Activated naive CD4-positive, alpha-beta T cell treated with anti-CD3 and anti-CD28 coated beads for 36 hours (primary cell): ENCODE measurements at regions of chr1 and their contacts with region 1.

Region 1: GRCh38 chr1:7752512-7753417 is 18.3 kb upstream of the VAMP3 start:
- DNase-seq: peak; percentile 69
- H3K4me3 Mint-ChIP-seq: no peak overlapping the region
- H3K27ac Mint-ChIP-seq: no peak overlapping the region
- H3K4me1 Mint-ChIP-seq: peaks cover 8% of the 10 kb centered on the region
- H3K27me3 Mint-ChIP-seq: peaks cover 8% of the 10 kb centered on the region

Region 2: GRCh38 chr1:7539769-7540175 is 213.0 kb before region 1 on chr1:
- CTCF ChIA-PET with region 1: no interaction called
- intact Hi-C with region 1: loop called (anchors 10 kb)
- DNase-seq: peak; percentile 61
- H3K4me3 Mint-ChIP-seq: no peak overlapping the region
- H3K27ac Mint-ChIP-seq: no peak overlapping the region
- H3K4me1 Mint-ChIP-seq: no peaks in the 10 kb centered on the region
- H3K27me3 Mint-ChIP-seq: peaks cover 7% of the 10 kb centered on the region

Region 3: DNA sequence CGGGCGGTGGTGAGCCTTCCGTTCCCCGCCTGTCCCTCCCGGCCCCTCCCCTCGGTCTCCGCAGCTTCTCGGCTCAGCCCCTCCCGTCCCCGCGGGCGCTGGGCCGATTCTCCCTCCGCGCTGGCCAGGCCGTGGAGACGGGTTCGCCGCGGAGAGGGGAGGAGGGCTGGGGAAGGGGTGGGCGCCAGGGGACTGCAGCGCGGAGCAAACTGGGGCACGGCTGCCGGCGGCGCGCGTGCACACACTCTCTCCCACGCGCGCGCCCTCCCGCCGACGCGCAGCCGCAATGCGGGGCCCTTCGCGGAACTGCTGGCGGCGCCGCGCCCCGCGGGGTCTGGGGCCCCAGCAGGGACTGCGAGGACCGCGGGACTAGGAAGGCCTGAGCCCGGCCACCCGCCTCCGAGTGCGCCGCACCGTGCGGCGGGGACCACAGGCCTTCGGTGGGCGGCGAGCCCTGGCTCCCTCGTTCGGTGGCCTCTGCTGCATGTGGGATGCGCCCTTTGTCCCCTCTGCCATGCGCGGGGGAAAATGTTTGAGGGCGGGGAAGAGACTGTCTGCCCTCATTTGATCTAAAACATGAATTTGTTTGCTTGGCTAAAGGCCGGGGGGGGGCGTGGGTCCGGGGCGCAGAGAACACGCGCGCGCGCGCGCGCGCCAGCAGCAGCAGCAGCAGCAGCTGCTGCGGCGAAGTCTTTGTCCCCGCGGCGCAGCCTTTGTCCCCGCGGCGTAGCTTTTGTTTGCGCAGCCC is 72.4 kb before region 1 on chr1:
- CTCF ChIA-PET with region 1: interaction called, 42 read pairs
- intact Hi-C with region 1: no loop called
- DNase-seq: peak; percentile 17
- H3K4me3 Mint-ChIP-seq: peak overlapping the region; percentile 70
- H3K27ac Mint-ChIP-seq: no peak overlapping the region
- H3K4me1 Mint-ChIP-seq: no peaks in the 10 kb centered on the region
- H3K27me3 Mint-ChIP-seq: no peaks in the 10 kb centered on the region

Region 4: GRCh38 chr1:7710859-7711258 is 41.9 kb before region 1 on chr1:
- CTCF ChIA-PET with region 1: interaction called, 20 read pairs
- intact Hi-C with region 1: no loop called
- DNase-seq: no peak
- H3K4me3 Mint-ChIP-seq: no peak overlapping the region
- H3K27ac Mint-ChIP-seq: no peak overlapping the region
- H3K4me1 Mint-ChIP-seq: peaks cover 3% of the 10 kb centered on the region
- H3K27me3 Mint-ChIP-seq: peaks cover 36% of the 10 kb centered on the region

Region 5: DNA sequence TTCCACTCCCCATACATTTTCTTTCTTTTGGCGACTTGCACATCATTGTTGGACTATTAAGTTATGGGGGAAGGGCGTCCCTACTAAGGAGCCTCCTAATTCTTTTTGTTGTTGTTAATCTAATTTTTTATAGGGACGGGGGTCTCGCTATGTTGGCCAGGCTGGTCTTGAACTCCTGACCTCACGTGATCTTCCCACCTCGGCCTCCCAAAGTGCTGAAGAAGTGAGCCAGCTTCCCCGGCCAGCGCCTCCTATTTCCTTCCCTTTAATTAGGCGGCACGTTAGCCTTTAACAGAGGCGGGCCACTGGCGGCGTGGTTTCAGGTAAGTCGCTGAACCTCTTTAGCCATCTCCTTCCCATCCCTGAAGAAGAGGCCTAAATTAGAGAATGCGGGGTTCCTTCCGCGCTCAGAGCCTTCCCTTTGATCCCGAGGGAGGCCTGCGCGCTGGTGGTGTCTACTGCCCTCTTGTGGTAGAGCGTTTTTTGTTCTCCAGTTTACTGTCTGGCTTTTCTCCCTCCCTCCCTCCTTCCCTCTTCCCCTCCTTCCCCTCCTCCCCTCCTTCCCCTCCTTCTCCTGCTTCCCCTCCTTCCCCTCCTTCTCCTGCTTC is 149.8 kb after region 1 on chr1:
- CTCF ChIA-PET with region 1: interaction called, 5 read pairs
- intact Hi-C with region 1: loop called (anchors 2 kb)
- DNase-seq: peak; percentile 73
- H3K4me3 Mint-ChIP-seq: peak overlapping the region; percentile 62
- H3K27ac Mint-ChIP-seq: no peak overlapping the region
- H3K4me1 Mint-ChIP-seq: peaks cover 6% of the 10 kb centered on the region
- H3K27me3 Mint-ChIP-seq: no peaks in the 10 kb centered on the region